AG04449 (cell line): ENCODE measurements at regions of chr2 and their contacts with region 1.

Region 1: GRCh38 chr2:223797811-223798721 is 39.3 kb downstream of the AP1S3 start:
- DNase-seq: no peak
- H3K4me3 ChIP-seq: no peak overlapping the region
- CTCF ChIP-seq: peak; percentile 63

Region 2: GRCh38 chr2:222912117-222912516 is 885.9 kb before region 1 on chr2:
- CTCF ChIA-PET with region 1: interaction called, 15 read pairs
- POLR2A ChIA-PET with region 1: no interaction called
- DNase-seq: no peak
- H3K4me3 ChIP-seq: no peak overlapping the region
- CTCF ChIP-seq: no peak

Region 3: DNA sequence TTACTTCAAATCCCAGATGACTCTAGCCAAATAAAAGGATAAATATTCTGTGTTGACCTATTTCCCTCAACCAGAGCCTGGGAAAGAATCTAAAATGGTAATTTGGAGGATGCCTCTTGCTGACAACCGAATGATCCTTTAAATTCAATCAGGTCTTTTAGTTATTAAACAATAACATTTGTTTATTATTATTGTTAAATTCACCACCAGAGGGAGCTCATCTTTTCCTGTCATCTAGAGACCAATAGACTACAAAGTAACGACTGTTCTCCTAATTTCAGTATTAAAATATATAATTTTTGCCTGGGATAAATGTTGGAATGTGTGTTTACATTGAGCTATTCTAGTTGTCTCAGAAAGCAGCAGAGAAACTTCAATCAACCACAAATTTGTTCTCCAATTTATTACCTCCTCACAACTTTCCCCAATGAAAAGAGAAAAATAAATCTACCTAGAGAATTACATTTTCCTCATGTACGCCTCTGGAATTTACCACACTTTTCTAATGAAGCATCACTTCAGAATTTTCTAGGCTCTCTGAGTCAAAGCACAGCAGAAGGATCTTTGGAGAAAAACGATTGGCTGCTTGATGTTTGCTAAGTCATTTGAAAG is 338.6 kb before region 1 on chr2:
- CTCF ChIA-PET with region 1: interaction called, 37 read pairs
- POLR2A ChIA-PET with region 1: no interaction called
- DNase-seq: no peak
- H3K4me3 ChIP-seq: no peak overlapping the region
- CTCF ChIP-seq: no peak

Region 4: GRCh38 chr2:223692191-223692947 is 105.7 kb before region 1 on chr2:
- CTCF ChIA-PET with region 1: interaction called, 62 read pairs
- POLR2A ChIA-PET with region 1: no interaction called
- DNase-seq: no peak
- H3K4me3 ChIP-seq: no peak overlapping the region
- CTCF ChIP-seq: peak; percentile 74

Region 5: GRCh38 chr2:223727562-223727961 is 70.5 kb before region 1 on chr2:
- CTCF ChIA-PET with region 1: interaction called, 25 read pairs
- POLR2A ChIA-PET with region 1: no interaction called
- DNase-seq: no peak
- H3K4me3 ChIP-seq: no peak overlapping the region
- CTCF ChIP-seq: peak; percentile 66

Region 6: GRCh38 chr2:223786943-223787342 is 11.1 kb before region 1 on chr2:
- CTCF ChIA-PET with region 1: interaction called, 31 read pairs
- POLR2A ChIA-PET with region 1: no interaction called
- DNase-seq: no peak
- H3K4me3 ChIP-seq: no peak overlapping the region
- CTCF ChIP-seq: no peak